PC-9 (cell line): ENCODE measurements at regions of chrX and their contacts with region 1.

Region 1: DNA sequence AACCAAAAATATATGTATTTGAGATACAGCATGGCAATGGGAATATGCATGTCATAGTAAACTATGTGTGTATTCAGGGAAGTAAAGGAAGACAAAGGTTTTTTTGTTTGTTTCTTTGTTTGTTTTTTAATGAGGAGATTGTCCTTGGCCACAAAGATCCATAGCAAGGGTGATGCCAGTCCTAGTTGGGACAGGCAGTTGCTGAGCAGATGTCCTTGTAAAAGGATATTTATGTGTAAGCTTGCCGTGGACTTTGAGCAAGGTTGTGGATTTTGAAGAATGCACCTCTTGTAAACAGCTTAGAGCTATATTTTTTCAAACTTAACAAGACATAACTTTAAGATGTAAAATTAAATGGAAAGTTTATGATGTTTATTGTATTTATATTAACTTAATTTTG is 69.9 kb upstream of the GABRE start:
- DNase-seq: no peak
- H3K4me3 ChIP-seq: no peak overlapping the region
- H3K27ac ChIP-seq: no peak overlapping the region
- H3K4me1 ChIP-seq: peaks cover 12% of the 10 kb centered on the region
- H3K27me3 ChIP-seq: no peaks in the 10 kb centered on the region
- CTCF ChIP-seq: no peak

Region 2: GRCh38 chrX:152108527-152108926 is 64.1 kb after region 1 on chrX:
- CTCF ChIA-PET with region 1: no interaction called
- POLR2A ChIA-PET with region 1: no interaction called
- intact Hi-C with region 1: loop called (anchors 10 kb)
- DNase-seq: no peak
- H3K4me3 ChIP-seq: no peak overlapping the region
- H3K27ac ChIP-seq: no peak overlapping the region
- H3K4me1 ChIP-seq: no peaks in the 10 kb centered on the region
- H3K27me3 ChIP-seq: no peaks in the 10 kb centered on the region
- CTCF ChIP-seq: no peak